ENCODE measurements at regions of chr9 and their contacts with region 1.

Region 1: DNA sequence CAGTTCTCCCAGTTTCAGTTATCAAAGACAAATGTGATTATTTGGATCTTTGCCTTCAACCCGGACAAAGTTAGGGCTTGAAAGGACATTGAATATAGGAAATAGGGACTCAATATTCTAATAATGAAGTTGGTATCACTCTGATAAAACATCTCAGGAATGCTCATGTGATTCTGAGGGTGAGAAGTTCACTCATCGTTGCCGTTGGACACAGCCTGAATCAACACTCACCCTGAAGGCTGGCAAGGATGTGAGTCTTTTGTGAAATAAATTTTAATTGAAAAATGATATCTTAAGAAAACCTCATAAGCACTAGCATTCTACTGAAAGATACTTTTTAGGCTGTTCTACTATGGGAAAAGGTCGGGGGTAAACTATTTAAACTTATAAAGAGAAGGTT is 44.8 kb upstream of the C9orf72 start:
- DNase-seq: no peak
- ATAC-seq: no peak
- H3K4me3 ChIP-seq: no peak overlapping the region
- H3K27ac ChIP-seq: no peak overlapping the region
- H3K4me1 ChIP-seq: no peaks in the 10 kb centered on the region
- H3K27me3 ChIP-seq: no peaks in the 10 kb centered on the region; a peak in 2 of 4 replicates
- CTCF ChIP-seq: no peak
- EP300 ChIP-seq: no peak
- POLR2A ChIP-seq: no peak
- RAD21 ChIP-seq: no peak

Region 2: GRCh38 chr9:27628311-27628710 is 10.2 kb after region 1 on chr9:
- CTCF ChIA-PET with region 1: no interaction called
- POLR2A ChIA-PET with region 1: no interaction called
- RAD21 ChIA-PET with region 1: no interaction called
- SMC1A ChIA-PET with region 1: no interaction called
- in situ Hi-C with region 1: no loop called
- intact Hi-C with region 1: no loop called
- DNase-seq: no peak
- ATAC-seq: no peak
- H3K4me3 ChIP-seq: no peak overlapping the region
- H3K27ac ChIP-seq: no peak overlapping the region
- H3K4me1 ChIP-seq: no peaks in the 10 kb centered on the region
- H3K27me3 ChIP-seq: no peaks in the 10 kb centered on the region
- CTCF ChIP-seq: no peak
- EP300 ChIP-seq: no peak
- POLR2A ChIP-seq: no peak
- RAD21 ChIP-seq: no peak

Region 3: DNA sequence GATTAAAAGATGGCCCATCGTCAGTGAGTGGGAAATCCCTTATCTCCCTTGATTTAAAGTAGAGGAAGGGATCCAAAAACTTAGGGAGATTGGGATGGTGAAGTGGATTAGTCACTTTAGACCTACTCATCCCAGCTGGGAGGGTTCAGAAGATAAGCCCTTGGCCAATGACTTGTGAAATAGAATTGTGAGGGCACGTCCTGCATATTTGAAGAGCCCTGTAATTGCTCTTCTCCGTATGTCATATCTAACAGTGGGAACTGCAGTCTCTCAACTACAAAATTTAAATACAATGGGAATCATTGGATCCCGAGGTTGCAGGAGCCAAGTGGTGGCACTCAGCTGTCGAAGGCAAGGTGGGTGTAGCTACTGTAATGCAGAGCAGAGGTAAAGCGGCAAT is 20.6 kb after region 1 on chr9:
- CTCF ChIA-PET with region 1: interaction called, 3 read pairs
- POLR2A ChIA-PET with region 1: no interaction called
- RAD21 ChIA-PET with region 1: no interaction called
- SMC1A ChIA-PET with region 1: no interaction called
- in situ Hi-C with region 1: no loop called
- intact Hi-C with region 1: loop called (anchors 2 kb)
- DNase-seq: no peak
- ATAC-seq: no peak
- H3K4me3 ChIP-seq: no peak overlapping the region
- H3K27ac ChIP-seq: no peak overlapping the region
- H3K4me1 ChIP-seq: no peaks in the 10 kb centered on the region
- H3K27me3 ChIP-seq: no peaks in the 10 kb centered on the region
- CTCF ChIP-seq: no peak
- EP300 ChIP-seq: no peak
- POLR2A ChIP-seq: no peak
- RAD21 ChIP-seq: no peak